ENCODE measurements at regions of chr17 and their contacts with region 1.

Region 1: GRCh38 chr17:41665566-41666236 is 23.0 kb upstream of the EIF1 start:
- DNase-seq: peak; percentile 86
- H3K4me3 Mint-ChIP-seq: peak overlapping the region; percentile 79
- H3K27ac Mint-ChIP-seq: peak overlapping the region; percentile 98
- H3K4me1 Mint-ChIP-seq: peaks cover 42% of the 10 kb centered on the region
- H3K27me3 Mint-ChIP-seq: peaks cover 13% of the 10 kb centered on the region

Region 2: GRCh38 chr17:41377546-41377945 is 288.2 kb before region 1 on chr17:
- CTCF ChIA-PET with region 1: no interaction called
- POLR2A ChIA-PET with region 1: no interaction called
- DNase-seq: no peak
- H3K4me3 Mint-ChIP-seq: no peak overlapping the region
- H3K27ac Mint-ChIP-seq: no peak overlapping the region
- H3K4me1 Mint-ChIP-seq: peaks cover 7% of the 10 kb centered on the region
- H3K27me3 Mint-ChIP-seq: peaks cover 4% of the 10 kb centered on the region

Region 3: GRCh38 chr17:41642252-41643156 is 23.2 kb before region 1 on chr17:
- CTCF ChIA-PET with region 1: interaction called, 235 read pairs
- POLR2A ChIA-PET with region 1: no interaction called
- DNase-seq: no peak
- H3K4me3 Mint-ChIP-seq: no peak overlapping the region
- H3K27ac Mint-ChIP-seq: no peak overlapping the region
- H3K4me1 Mint-ChIP-seq: no peaks in the 10 kb centered on the region
- H3K27me3 Mint-ChIP-seq: no peaks in the 10 kb centered on the region

Region 4: DNA sequence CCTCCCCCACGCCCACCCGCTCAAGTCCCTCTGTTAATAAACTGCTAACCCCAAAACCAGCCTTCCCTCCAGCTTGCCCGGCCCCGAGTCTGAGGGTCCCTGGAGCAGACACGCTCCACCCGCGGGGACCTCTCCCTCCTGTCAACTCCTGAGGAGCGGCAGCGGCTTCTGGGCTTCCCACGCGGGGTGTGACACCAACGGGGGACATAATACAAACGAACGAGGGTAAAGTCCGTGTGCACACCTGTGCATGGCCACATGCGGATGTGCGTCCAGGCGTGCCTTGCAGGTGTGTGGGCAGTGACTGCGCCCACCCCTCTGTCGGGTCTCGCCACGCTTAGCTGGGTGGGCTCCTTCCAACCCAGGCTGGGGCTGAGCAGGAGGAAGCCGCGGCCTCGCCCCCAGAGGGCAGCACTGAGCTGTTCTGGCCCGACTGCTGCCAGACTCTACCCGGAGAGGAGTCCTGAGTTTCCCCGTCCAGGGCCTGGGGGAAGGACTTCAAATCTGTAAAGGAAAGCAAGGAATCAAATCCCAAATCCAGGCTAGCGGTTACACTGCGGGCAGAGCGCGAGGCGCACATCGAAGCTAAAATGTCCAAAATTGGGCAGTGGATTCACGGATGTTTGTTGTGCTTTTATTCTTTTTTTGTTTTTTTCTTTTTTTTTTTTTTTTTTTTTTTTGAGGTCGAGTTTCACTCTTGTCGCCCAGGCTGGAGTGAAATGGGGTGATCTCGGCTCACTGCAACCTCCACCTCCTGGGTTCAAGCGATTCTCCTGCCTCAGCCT is 17.1 kb before region 1 on chr17:
- CTCF ChIA-PET with region 1: interaction called, 235 read pairs
- POLR2A ChIA-PET with region 1: no interaction called
- DNase-seq: peak; percentile 83
- H3K4me3 Mint-ChIP-seq: peak overlapping the region; percentile 53
- H3K27ac Mint-ChIP-seq: peak overlapping the region; percentile 81
- H3K4me1 Mint-ChIP-seq: peaks cover 10% of the 10 kb centered on the region
- H3K27me3 Mint-ChIP-seq: no peaks in the 10 kb centered on the region

Region 5: DNA sequence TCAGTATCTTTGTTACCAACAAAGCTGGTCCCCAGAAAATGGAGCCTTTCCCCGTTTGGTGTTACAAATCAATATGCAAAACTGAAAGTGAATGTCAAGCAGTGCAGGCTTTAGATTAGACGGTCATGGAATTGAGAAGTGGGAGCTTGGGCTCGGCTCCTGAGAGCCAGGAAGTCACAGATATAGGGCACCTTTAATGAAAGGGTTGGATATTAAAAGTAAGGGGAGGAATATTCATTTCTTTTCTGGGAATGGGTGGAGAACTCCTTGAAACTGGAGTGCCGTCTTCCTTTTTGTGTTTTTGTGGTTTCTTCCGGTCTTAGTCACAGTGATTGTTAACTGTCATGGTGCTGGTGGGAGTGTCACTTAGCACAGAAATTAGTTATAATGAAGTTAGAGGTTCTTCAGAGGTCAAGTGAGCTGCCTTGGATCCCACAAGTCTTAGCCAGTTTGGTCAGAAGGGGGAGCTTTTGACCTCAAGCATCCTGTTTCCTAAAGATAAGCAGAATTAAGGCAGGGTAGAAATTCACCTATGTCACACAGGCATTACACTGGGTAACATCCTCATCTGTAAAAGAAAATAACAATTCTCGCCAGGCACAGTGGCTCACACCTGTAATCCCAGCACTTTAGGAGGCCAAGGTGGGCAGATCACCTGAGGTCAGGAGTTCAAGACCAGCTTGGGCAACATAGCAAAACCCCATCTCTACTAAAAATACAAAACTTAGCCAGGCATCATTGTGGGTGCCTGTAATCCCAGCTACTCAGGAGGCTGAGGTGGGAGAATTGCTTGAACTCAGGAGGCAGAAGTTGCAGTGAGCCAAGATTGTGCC is 13.4 kb after region 1 on chr17:
- CTCF ChIA-PET with region 1: interaction called, 137 read pairs
- POLR2A ChIA-PET with region 1: interaction called, 4 read pairs
- DNase-seq: peak; percentile 88
- H3K4me3 Mint-ChIP-seq: peak overlapping the region; percentile 77
- H3K27ac Mint-ChIP-seq: peak overlapping the region; percentile 96
- H3K4me1 Mint-ChIP-seq: peaks cover 58% of the 10 kb centered on the region
- H3K27me3 Mint-ChIP-seq: no peaks in the 10 kb centered on the region

Region 6: DNA sequence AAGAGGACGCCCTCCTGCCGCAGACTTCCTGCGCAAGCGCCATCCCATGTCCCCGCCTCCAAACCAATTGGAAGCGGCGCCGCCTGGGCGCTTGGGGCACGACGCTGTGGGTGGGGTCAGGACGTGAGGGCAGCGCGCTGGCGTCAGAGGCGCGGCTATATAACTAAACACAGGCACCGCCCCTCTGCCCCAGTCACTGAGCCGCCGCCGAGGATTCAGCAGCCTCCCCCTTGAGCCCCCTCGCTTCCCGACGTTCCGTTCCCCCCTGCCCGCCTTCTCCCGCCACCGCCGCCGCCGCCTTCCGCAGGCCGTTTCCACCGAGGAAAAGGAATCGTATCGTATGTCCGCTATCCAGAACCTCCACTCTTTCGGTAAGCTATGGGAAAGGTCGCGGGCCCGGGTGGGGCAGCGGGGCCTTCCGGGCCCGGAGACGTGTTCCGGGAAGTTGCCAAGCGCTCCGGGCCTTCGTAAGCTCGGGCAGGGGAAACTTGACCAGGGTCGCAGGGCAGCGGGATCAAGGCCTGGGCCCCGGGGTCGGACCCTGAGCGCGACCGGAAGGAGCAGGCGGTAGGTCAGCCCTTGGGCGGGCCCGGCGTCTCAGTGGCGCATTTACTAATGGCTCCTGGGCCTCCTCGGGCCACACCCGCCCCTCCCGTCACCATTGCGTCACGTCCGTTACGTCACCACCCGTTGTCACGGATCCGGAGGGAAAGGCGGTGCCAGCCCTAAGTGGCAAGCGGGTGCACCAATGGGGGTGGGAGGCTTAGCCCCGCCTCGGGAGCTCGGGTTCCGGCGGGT is 23.2 kb after region 1 on chr17 and contains the start of gene EIF1:
- CTCF ChIA-PET with region 1: interaction called, 137 read pairs
- POLR2A ChIA-PET with region 1: interaction called, 10 read pairs
- DNase-seq: peak; percentile 100
- H3K4me3 Mint-ChIP-seq: peak within 1 kb of the TSS; percentile 88
- H3K27ac Mint-ChIP-seq: peak within 1 kb of the TSS; percentile 100
- H3K4me1 Mint-ChIP-seq: peaks cover 36% of the 10 kb centered on the region
- H3K27me3 Mint-ChIP-seq: no peaks in the 10 kb centered on the region
- total RNA-seq, gene EIF1: 605 to 645 TPM

Region 7: DNA sequence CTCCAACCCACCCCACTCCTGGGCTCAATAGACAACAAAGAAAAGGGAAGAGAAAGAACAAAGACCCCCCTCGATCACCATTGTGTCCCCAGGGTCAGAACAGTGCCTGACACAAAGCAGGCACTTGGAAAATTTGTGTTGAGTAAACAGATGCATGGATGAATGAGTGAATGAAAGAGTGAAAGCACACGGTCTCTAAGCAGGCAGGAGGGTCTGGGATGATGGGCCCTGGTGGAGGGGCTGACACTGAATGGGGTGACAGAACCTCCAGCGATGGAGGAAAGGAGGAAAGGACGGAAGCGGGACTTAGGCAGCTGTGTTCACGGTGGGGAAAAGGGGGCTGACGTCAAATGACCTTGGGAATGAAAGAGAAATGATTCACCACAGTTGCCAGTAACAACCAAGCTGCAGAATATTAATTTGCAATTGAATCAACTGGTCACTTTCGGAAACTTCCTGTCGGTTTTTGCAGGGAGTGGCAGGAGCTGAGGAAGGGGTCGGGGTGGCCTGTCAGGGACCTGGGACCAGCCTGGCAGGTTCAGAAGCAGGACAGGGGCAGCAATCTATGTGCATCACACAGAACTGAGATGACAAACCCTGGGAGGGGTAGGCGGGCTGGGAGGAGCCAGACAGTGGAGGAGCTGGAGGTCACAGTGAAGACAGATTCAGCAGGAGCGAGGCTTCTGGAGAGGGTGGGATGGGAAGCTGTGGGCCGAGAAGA is 39.7 kb after region 1 on chr17:
- CTCF ChIA-PET with region 1: no interaction called
- POLR2A ChIA-PET with region 1: no interaction called
- DNase-seq: no peak
- H3K4me3 Mint-ChIP-seq: no peak overlapping the region
- H3K27ac Mint-ChIP-seq: no peak overlapping the region
- H3K4me1 Mint-ChIP-seq: peaks cover 5% of the 10 kb centered on the region
- H3K27me3 Mint-ChIP-seq: peaks cover 6% of the 10 kb centered on the region

Region 8: DNA sequence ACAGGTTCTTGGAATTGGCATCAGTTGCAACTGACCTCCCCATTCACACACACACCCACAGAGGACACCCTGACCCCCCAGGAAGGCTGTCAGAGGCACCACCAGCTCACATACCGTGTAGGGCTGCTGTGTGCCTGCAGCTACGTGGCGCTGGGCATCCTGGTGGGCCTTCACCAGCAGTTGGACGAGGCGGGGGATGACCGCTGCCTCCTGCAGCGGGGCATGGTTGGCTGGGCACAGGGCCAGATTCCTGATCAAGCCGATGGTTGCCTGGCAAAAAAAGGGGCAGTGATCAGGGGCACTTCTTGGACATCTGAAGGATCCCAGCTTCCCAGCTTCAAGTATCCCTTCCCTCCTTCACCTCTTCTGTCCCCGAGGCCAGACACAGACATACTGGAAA is 92.9 kb after region 1 on chr17:
- CTCF ChIA-PET with region 1: no interaction called
- POLR2A ChIA-PET with region 1: no interaction called
- DNase-seq: no peak
- H3K4me3 Mint-ChIP-seq: no peak overlapping the region
- H3K27ac Mint-ChIP-seq: no peak overlapping the region
- H3K4me1 Mint-ChIP-seq: no peaks in the 10 kb centered on the region
- H3K27me3 Mint-ChIP-seq: no peaks in the 10 kb centered on the region

Measured in activated CD4-positive, alpha-beta T cell treated with anti-CD3 and anti-CD28 coated beads, Interleukin-2, amount 10 ng/mL, durations not matched to agents 7 days and 5 days (primary cell).